Mammary epithelial cell (primary cell): ENCODE measurements at regions of chr6 and their contacts with region 1.

Region 1: DNA sequence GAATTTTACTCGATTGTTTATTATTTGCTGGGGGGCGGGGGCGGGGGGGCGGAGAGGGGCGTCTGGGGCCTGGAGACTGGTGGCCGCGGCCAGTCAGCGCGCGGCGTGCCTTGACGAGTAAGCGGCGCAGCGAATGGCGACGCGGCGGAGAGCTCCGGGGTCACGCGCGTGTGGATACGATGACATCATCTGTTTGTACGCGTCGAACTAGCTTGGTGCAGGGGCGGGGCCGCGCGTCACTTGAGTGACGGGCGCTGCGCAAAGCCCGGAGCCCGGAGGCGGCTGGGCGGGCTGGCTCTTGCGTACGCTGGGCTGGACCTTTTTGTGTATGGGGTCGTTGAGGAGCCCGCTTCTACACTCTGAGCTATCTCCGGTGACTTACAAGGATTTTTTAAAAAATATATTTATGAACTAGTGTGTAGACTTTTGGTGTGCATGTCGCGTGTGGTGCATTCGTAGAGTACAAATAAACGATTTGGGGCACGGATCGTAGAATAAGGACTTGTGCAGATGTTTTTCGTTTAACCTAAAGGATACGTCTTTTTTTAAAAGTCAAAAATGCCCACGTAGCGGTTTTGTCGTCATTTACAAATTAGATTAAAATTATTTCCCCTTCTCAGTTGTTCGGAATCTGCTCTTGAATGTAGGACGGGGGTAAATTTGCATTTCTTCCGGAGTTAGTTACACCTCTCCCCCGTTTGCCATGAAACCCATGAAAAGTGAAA is 2.2 kb upstream of the FOXO3 start:
- DNase-seq: peak; percentile 98
- H3K4me3 ChIP-seq: peak overlapping the region; percentile 82 to 93 (median 85)
- H3K27ac ChIP-seq: peak overlapping the region; percentile 83
- H3K4me1 ChIP-seq: peaks cover 30% of the 10 kb centered on the region
- H3K27me3 ChIP-seq: no peaks in the 10 kb centered on the region
- CTCF ChIP-seq: no peak

Region 2: GRCh38 chr6:108655806-108656651 is 97.5 kb after region 1 on chr6:
- CTCF ChIA-PET with region 1: no interaction called
- dilution Hi-C with region 1: no loop called
- in situ Hi-C with region 1: loop called in 1 of 2 experiments (anchors 25 kb)
- intact Hi-C with region 1: loop called (anchors 2 kb)
- DNase-seq: no peak
- H3K4me3 ChIP-seq: no peak overlapping the region
- H3K27ac ChIP-seq: no peak overlapping the region
- H3K4me1 ChIP-seq: peaks cover 48% of the 10 kb centered on the region
- H3K27me3 ChIP-seq: no peaks in the 10 kb centered on the region
- CTCF ChIP-seq: no peak

Region 3: GRCh38 chr6:108732136-108732885 is 173.8 kb after region 1 on chr6:
- CTCF ChIA-PET with region 1: no interaction called
- dilution Hi-C with region 1: no loop called
- in situ Hi-C with region 1: no loop called
- intact Hi-C with region 1: loop called (anchors 5 kb)
- DNase-seq: peak; percentile 89
- H3K4me3 ChIP-seq: no peak overlapping the region
- H3K27ac ChIP-seq: no peak overlapping the region
- H3K4me1 ChIP-seq: peaks cover 38% of the 10 kb centered on the region
- H3K27me3 ChIP-seq: no peaks in the 10 kb centered on the region
- CTCF ChIP-seq: no peak

Region 4: GRCh38 chr6:108835218-108835850 is 276.8 kb after region 1 on chr6:
- CTCF ChIA-PET with region 1: no interaction called
- dilution Hi-C with region 1: no loop called
- in situ Hi-C with region 1: no loop called
- intact Hi-C with region 1: loop called (anchors 1 kb)
- DNase-seq: peak; percentile 42
- H3K4me3 ChIP-seq: no peak overlapping the region
- H3K27ac ChIP-seq: no peak overlapping the region
- H3K4me1 ChIP-seq: peaks cover 20% of the 10 kb centered on the region
- H3K27me3 ChIP-seq: no peaks in the 10 kb centered on the region
- CTCF ChIP-seq: peak; percentile 82 to 91

Region 5: DNA sequence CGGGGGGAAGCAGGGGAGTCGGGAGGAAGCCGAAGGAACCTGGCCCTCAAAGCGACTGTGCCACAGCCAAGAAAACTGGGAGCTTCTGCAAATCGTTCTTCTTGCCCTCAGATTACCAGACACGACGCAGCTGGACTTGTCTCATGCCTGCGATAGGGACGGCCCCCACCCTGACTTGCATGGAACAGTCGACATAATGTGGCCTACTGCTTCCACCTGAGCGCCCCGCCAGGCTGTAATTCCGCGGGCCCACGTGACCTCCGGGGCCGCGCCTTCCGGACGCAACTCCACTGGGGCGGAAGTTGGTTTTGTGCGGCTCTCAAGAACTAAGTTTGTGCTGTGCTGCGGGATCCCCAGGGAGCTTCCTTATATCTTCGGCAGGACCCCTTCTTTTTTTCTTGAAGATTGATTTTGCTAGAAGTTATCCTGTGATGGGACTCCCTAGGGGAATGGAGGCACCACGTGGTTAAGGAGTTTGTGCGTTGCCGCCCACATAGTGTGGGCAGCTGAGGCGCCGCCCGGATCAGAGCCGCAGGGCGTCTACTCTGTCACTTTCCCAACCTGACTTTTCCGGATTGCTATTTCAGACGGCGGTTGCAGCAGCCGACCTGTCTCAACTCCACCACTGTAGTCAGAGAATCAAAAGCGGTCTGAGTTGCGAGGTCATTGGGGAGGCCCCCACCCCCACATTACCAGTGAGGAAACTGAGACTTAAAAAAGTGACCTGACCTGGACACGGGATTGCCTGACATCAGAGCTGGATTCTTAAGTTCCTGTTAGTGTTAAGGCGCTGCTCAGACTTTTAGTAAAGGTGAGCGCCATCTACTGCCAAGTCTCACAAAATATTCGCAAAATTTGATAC is 824.3 kb after region 1 on chr6:
- CTCF ChIA-PET with region 1: no interaction called
- dilution Hi-C with region 1: no loop called
- in situ Hi-C with region 1: loop called in 1 of 2 experiments (anchors 25 kb)
- intact Hi-C with region 1: no loop called
- DNase-seq: peak; percentile 93
- H3K4me3 ChIP-seq: peak overlapping the region; percentile 70 to 100 (median 95)
- H3K27ac ChIP-seq: peak overlapping the region; percentile 98
- H3K4me1 ChIP-seq: peaks cover 29% of the 10 kb centered on the region
- H3K27me3 ChIP-seq: no peaks in the 10 kb centered on the region
- CTCF ChIP-seq: peak; percentile 42 to 61